Activated T-helper 1 cell treated with anti-CD3 and anti-CD28 coated beads, Interleukin-12 subunit alpha, Interleukin-12 subunit beta, Interleukin-2, Interleukin-4 antibody, amounts not matched to agents 30 ng/mL and 10 ng/mL and 1 ng/mL, durations not matched to agents 14 hours and 24 hours and 36 hours (primary cell): ENCODE measurements at regions of chr3 and their contacts with region 1.

Region 1: DNA sequence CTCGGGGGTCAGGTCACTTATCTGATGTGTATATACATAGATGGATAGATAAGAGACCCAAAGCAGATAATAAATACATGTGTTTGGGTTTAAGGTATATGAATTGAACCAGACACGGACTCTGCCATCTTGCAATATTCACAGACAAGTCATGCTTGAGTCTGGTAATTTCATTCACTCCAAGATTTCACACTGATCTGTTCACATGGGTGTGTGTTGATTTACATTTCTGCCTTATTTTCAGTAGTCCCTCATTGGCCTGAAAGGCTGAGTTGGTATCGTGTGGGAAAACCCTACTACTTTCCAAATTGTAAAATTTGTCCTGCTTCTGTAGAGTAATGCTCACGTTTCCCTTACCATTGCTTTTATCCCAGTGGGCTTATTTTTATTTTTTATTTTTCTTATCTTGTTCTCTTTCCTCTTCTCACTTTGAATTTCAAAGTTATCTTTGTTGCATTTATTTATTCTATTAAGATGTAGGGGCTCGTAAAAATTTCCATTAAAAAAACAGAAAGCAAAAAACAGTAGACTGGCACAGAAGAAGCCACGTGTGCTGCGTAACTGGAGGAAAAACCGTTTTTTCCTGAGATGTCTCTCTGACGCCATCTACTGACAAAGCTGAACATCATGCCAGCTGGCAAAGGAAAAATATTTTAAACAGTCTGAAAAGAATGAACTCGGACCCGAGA is 10.8 kb upstream of the MFSD1 start:
- DNase-seq: no peak
- H3K4me3 Mint-ChIP-seq: peak overlapping the region; percentile 71
- H3K27ac Mint-ChIP-seq: peak overlapping the region; percentile 16
- H3K4me1 Mint-ChIP-seq: peaks cover 5% of the 10 kb centered on the region
- H3K27me3 Mint-ChIP-seq: peaks cover 7% of the 10 kb centered on the region

Region 2: DNA sequence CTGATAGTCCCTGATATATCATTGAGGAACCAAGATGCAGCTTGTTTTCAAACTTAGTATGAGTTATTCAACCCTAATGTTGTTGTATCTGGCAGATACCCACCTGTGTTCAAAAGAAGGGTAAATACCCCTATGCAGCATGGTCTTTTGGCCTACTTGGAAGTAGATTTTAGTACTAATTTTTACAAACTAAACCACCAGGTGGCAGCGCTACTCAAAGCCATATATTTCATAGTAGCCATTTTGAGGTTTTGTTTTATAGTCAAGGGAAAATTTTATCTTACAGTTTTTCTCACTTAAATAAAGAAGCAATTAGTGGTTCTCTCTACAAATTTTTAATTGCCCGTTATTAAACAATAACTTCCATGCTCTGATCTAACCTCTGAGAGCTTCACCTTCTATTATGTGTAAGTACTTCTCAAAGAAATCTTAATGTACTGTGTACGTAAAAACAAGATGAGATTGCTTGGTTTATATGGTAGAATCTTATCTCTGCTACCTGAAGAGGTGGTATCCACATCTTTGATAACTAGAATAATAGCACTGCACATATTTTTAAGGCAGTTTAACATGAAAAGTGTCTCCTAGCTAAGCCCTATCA is 251.5 kb before region 1 on chr3:
- intact Hi-C with region 1: loop called (anchors 1 kb)
- DNase-seq: peak; percentile 6
- H3K4me3 Mint-ChIP-seq: no peak overlapping the region
- H3K27ac Mint-ChIP-seq: no peak overlapping the region
- H3K4me1 Mint-ChIP-seq: no peaks in the 10 kb centered on the region
- H3K27me3 Mint-ChIP-seq: no peaks in the 10 kb centered on the region

Region 3: GRCh38 chr3:158659454-158660237 is 131.4 kb before region 1 on chr3:
- intact Hi-C with region 1: loop called (anchors 1 kb)
- DNase-seq: peak; percentile 40
- H3K4me3 Mint-ChIP-seq: no peak overlapping the region
- H3K27ac Mint-ChIP-seq: no peak overlapping the region
- H3K4me1 Mint-ChIP-seq: no peaks in the 10 kb centered on the region
- H3K27me3 Mint-ChIP-seq: no peaks in the 10 kb centered on the region

Region 4: DNA sequence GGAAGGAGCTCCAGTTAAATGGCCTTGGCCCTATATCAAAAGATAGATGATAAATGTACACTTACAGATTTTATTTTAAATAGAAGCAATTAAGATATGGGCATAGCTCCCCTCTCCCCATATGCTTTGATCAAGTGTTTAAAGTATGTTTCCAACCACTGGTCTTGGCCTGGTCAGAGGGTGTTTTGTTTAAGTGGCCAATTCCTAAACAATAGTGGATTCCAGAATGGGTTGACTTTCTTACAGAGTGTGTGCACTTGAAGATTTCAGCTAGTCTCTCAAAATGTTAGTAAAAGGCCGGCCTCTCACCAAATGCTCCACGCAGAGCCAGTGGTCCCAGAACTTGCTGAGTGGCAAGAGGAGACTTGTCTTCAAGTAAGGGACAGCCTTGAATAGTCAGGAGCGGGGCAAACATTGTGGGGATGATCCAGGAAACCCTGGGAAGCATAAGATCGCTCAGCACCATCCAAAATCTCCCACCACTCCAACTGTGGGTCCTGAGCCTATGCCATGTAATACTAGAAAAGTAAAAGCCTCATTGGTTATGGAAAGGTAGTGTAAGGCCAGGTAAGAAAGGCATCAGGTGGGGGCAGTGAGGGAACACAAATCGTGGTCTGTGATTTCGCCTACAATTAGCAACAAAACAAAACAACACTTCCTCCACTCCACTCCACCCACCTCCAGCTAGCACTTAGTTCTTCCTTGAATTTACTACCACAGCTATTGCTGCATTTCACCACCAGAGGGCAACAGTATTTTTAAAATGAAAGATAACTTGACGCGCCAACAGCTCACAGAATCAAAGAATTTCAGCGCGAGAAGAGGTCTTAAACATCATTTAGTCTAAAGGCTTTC is 63.6 kb before region 1 on chr3:
- intact Hi-C with region 1: loop called (anchors 1 kb)
- DNase-seq: peak; percentile 36
- H3K4me3 Mint-ChIP-seq: peak overlapping the region; percentile 47
- H3K27ac Mint-ChIP-seq: peak overlapping the region; percentile 6
- H3K4me1 Mint-ChIP-seq: peaks cover 37% of the 10 kb centered on the region
- H3K27me3 Mint-ChIP-seq: no peaks in the 10 kb centered on the region

Region 5: DNA sequence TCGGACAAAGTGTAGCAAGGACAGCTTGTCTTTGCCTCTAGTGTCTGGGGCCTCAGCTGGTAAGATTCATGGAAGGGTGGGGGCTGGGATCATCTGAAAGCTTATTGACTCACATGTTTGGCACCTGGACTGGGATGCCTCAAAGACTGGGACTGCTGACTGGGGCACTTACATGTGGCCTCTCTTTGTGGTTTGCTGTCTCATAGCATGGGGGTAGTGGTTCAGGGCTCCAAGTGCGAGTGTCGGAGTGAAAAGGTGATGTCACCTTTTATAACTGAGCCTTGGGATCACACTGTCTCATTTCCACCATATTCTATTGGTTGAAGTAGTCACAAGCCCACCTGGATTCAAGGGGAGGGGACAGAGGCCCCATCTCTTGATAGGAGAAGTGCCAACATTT is 17.7 kb after region 1 on chr3:
- intact Hi-C with region 1: no loop called
- DNase-seq: no peak
- H3K4me3 Mint-ChIP-seq: peak overlapping the region; percentile 15
- H3K27ac Mint-ChIP-seq: peak overlapping the region; percentile 42
- H3K4me1 Mint-ChIP-seq: peaks cover 23% of the 10 kb centered on the region
- H3K27me3 Mint-ChIP-seq: no peaks in the 10 kb centered on the region

Region 6: DNA sequence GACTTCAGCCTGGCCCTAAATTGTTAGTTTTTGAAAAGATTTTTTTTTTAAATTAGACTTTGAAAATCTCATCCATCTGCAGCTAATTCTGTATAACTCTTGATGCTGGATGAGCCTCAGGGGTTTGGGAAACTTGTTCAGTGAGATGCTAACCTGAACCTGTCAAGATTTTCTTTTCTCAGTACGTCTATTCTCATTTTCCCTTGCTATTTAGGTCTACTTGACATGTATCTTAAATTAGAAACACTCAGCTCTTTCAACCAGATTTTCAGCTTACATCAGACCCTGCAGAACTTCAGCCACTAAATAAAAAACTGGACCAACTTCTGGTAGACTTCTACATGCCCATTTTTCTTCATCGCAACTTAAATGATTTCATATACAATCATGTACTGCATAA is 72.2 kb after region 1 on chr3:
- intact Hi-C with region 1: no loop called
- DNase-seq: no peak
- H3K4me3 Mint-ChIP-seq: no peak overlapping the region
- H3K27ac Mint-ChIP-seq: no peak overlapping the region
- H3K4me1 Mint-ChIP-seq: no peaks in the 10 kb centered on the region
- H3K27me3 Mint-ChIP-seq: no peaks in the 10 kb centered on the region

Region 7: DNA sequence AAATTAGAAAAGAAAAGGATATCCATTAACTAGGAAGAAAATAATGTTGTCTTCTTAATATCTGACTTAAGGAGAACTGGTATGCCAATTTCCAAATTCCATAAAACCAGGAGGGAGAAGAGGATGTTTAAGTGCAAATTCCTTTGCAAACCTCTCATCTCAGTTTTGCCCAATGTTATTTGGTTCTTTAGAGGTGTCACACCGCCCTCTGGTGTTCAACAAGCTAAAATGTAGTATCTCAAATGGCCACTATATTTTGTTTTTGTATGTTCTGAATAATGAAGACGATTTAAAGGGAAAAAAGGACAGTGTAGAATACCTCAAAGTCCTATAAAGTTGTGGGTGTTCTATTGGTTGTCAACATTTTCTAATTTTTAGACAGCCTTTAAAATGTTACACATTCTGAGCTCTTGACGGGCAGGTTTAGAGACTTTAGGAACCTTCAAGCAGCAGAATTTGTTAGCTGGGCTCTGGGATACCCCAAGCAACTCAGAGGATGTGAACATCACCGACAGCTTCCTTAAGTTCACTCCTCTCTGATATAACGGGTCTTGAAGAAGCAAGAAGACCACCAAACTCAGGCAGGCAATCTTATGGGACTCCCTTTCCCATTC is 469.1 kb after region 1 on chr3:
- intact Hi-C with region 1: loop called (anchors 1 kb)
- DNase-seq: peak; percentile 2
- H3K4me3 Mint-ChIP-seq: no peak overlapping the region
- H3K27ac Mint-ChIP-seq: no peak overlapping the region
- H3K4me1 Mint-ChIP-seq: no peaks in the 10 kb centered on the region
- H3K27me3 Mint-ChIP-seq: peaks cover 4% of the 10 kb centered on the region